Ovary (tissue), 10 donors: ENCODE measurements at regions of chr6 and their contacts with region 1.

Region 1: DNA sequence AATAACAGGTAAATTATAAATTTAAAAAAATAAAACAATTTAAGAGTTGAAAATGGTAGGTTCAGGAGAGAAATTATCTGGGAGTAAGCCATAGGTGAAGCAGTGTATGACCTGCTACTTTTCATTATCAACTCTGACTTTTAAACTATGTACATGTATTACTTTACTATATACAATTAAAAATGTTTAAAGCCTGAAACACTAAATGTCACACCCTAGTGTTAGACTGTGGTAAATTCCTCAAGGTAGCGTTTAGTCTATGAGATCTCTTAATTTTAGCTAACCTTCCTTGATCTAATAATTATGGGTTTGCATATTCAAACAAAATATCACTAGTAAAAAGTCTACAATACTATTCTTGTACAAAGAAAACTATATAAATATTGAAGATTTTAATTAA is 22.3 kb upstream of the TBC1D32 start:
- DNase-seq: no peak
- H3K4me3 ChIP-seq: no peak overlapping the region
- H3K27ac ChIP-seq: no peak overlapping the region
- H3K4me1 ChIP-seq: no peaks in the 10 kb centered on the region
- H3K27me3 ChIP-seq: no peaks in the 10 kb centered on the region
- CTCF ChIP-seq: no peak
- EP300 ChIP-seq: no peak
- POLR2A ChIP-seq: no peak

Region 2: GRCh38 chr6:121247386-121247785 is 109.2 kb before region 1 on chr6:
- intact Hi-C with region 1: no loop called
- DNase-seq: no peak
- H3K4me3 ChIP-seq: no peak overlapping the region
- H3K27ac ChIP-seq: no peak overlapping the region
- H3K4me1 ChIP-seq: no peaks in the 10 kb centered on the region
- H3K27me3 ChIP-seq: no peaks in the 10 kb centered on the region
- CTCF ChIP-seq: no peak
- EP300 ChIP-seq: no peak
- POLR2A ChIP-seq: no peak

Region 3: GRCh38 chr6:123329337-123329736 is 1972.8 kb after region 1 on chr6:
- intact Hi-C with region 1: loop called in 1 of 4 experiments (anchors 5 kb)
- DNase-seq: no peak
- H3K4me3 ChIP-seq: no peak overlapping the region
- H3K27ac ChIP-seq: no peak overlapping the region
- H3K4me1 ChIP-seq: no peaks in the 10 kb centered on the region
- H3K27me3 ChIP-seq: no peaks in the 10 kb centered on the region
- CTCF ChIP-seq: no peak
- EP300 ChIP-seq: no peak
- POLR2A ChIP-seq: no peak